Thyroid gland (tissue), 4 donors: ENCODE measurements at regions of chr1 and their contacts with region 1.

Region 1: DNA sequence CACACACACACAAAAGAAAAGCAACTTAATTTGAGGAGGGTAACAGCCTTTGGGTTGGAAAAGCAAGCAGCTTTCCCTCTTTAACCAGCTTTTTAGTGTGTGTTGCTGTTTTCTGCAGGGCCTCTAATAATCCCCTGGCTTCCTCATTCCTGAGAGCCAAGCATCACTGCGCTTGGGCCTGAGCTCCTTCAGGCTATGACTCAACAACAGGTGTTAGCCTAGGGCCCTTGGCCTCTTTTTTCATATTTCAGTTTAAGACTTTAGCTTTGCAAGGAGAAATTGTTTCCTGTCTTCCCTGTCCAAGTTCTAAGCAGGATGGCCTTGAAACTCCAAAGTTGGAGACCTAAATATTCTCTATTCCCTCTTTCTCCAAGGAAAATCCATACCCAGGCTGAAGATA is 26.2 kb upstream of the SNX27 start:
- DNase-seq: peak; percentile 28 to 40
- H3K4me3 ChIP-seq: no peak overlapping the region
- H3K27ac ChIP-seq: peak overlapping the region; percentile 54 to 77 (median 64)
- H3K4me1 ChIP-seq: peaks cover 16 to 31% of the 10 kb centered on the region in 2 donors
- H3K27me3 ChIP-seq: no peaks in the 10 kb centered on the region
- CTCF ChIP-seq: no peak
- POLR2A ChIP-seq: no peak

Region 2: DNA sequence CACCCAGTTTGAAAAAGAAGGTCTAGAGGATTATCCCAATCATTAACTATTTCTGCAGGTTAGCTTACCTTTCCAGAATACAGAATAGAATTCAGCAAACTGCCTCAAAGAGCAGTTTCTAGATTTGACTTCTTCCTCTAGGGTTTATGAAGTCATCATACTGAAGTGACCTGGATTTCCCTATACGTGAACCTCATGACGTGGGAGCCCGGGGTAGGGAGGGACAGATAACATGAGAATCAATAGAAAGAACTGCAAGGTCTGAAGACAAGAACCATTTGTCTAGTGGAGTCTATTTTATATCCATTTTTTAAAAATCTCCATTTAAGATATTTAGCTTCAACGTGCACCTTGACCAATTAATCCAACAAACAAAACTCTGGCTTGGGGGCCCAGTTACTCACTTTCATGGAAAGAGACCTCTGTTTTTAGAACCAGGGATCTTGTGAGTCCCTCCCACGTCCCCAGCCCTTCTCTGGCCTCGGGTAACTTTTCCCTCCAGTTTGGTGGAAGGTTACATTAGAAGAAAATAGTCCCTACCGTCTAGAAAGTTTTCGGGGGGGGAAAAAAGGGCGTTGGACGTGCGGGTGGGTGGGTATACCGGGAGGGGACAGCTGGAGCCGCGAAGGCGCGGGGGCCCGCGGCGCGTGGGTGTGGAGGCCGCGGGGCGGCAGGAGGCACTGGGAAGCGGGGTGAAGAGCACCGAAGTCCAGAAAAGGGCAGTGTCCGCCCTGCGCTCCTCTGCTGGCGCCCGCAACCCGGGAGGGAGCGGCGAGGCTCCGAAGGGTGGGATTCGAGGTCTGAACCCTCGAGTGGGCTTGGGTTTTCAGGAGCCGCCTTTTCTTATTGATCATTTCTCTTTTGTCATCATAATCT is 112.5 kb before region 1 on chr1:
- intact Hi-C with region 1: no loop called
- DNase-seq: peak; percentile 44 to 52
- H3K4me3 ChIP-seq: peak overlapping the region in 2 of 3 donors; percentile 56 to 70
- H3K27ac ChIP-seq: peak overlapping the region; percentile 44 to 67 (median 63)
- H3K4me1 ChIP-seq: peaks cover 4% of the 10 kb centered on the region in 2 donors
- H3K27me3 ChIP-seq: no peaks in the 10 kb centered on the region
- CTCF ChIP-seq: no peak
- POLR2A ChIP-seq: peak in 1 of 2 donors; percentile 19

Region 3: GRCh38 chr1:151828965-151829698 is 243.5 kb after region 1 on chr1:
- intact Hi-C with region 1: loop called (anchors 10 kb)
- DNase-seq: peak; percentile 82 to 88
- H3K4me3 ChIP-seq: no peak overlapping the region
- H3K27ac ChIP-seq: peak overlapping the region in 1 of 3 donors; percentile 10
- H3K4me1 ChIP-seq: peaks cover 46 to 51% of the 10 kb centered on the region in 2 donors
- H3K27me3 ChIP-seq: no peaks in the 10 kb centered on the region
- CTCF ChIP-seq: no peak
- POLR2A ChIP-seq: no peak